ENCODE measurements at regions of chr6 and their contacts with region 1.

Region 1: DNA sequence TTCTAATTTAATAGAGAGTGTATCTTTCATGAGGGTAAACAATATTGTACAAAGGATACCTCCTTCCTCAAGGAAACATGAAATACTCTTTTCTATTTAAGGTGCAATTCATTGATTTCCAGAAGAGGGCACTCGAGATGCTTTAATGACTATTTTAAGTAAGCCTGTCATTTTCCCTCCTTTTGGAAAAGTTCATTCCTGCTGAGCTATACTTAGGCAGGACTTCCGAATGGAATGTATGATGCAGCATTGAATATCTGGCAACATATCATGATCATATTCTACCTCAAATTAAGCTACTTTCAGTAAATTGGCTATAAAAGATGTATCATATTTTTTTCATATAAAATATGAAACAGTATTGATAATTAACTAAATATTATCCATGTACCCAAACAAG is 5.0 kb downstream of the DST start:
- DNase-seq: no peak
- ATAC-seq: peak in 7 of 8 donors; percentile 55 to 71 (median 66)
- H3K4me3 ChIP-seq: no peak overlapping the region
- H3K27ac ChIP-seq: peak overlapping the region in 1 of 10 donors; percentile 55
- H3K4me1 ChIP-seq: peaks cover 0 to 14% (median 3%) of the 10 kb centered on the region in 9 donors
- H3K27me3 ChIP-seq: no peaks in the 10 kb centered on the region
- CTCF ChIP-seq: peak in 8 of 9 donors; percentile 59 to 85 (median 76)

Region 2: DNA sequence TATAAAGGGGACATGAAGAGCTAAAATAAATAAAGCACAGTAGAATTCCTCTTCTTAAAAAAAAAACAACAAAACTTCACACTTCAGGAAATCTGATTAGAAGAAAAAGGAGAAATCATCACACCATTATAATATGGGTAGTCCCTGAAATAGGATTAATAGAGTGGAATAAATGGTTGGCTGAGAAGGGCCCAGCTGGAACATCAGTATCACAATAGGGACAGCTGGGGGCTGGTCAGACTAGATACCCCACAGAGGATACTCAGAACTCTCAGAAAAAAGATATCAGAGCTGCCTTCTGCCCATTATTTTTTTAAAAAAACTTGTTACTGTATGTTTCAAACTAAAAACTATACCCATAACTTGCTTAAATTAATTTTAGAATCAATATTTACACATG is 70.1 kb before region 1 on chr6:
- intact Hi-C with region 1: no loop called
- DNase-seq: no peak
- ATAC-seq: no peak
- H3K4me3 ChIP-seq: no peak overlapping the region
- H3K27ac ChIP-seq: no peak overlapping the region
- H3K4me1 ChIP-seq: peaks cover 0 to 10% (median 0%) of the 10 kb centered on the region in 9 donors
- H3K27me3 ChIP-seq: no peaks in the 10 kb centered on the region
- CTCF ChIP-seq: no peak

Region 3: DNA sequence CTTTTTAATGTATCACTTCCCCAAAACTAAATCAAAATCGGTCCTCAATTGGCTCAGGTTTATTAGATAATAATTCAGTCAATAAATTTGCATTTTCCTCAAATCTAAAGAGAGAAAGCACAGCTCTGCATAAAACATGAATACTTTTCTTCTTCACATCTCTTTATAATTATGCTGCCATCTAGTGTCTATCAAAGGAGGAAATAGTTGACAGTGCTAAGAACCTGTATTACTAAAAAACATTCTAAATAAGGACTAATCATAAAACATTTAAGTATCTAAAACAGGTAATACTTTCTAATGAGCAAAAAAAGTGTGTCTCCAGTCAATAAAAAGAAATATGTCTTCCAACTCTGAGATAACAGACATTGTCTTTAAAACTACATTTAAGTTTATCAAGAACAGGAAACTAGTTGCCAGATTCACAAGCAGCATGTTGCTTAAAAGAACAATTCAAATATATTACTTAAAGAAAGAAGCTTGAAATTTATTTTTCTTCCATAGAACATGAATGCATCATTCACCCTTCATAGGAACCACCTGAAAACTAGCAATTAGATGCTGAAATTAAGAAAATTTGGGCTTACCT is 61.5 kb after region 1 on chr6:
- intact Hi-C with region 1: loop called (anchors 1 to 5 kb)
- DNase-seq: no peak
- ATAC-seq: peak in 5 of 8 donors; percentile 52 to 74 (median 65)
- H3K4me3 ChIP-seq: no peak overlapping the region
- H3K27ac ChIP-seq: no peak overlapping the region
- H3K4me1 ChIP-seq: peaks cover 0 to 16% (median 8%) of the 10 kb centered on the region in 9 donors
- H3K27me3 ChIP-seq: no peaks in the 10 kb centered on the region
- CTCF ChIP-seq: peak; percentile 34 to 76 (median 60)

Region 4: GRCh38 chr6:56757588-56757984 is 119.9 kb after region 1 on chr6:
- intact Hi-C with region 1: loop called in 5 of 10 experiments (anchors 5 to 10 kb)
- DNase-seq: no peak
- ATAC-seq: peak in 7 of 8 donors; percentile 22 to 65 (median 58)
- H3K4me3 ChIP-seq: no peak overlapping the region
- H3K27ac ChIP-seq: peak overlapping the region in 1 of 10 donors; percentile 52
- H3K4me1 ChIP-seq: peaks cover 3 to 68% (median 59%) of the 10 kb centered on the region in 9 donors
- H3K27me3 ChIP-seq: no peaks in the 10 kb centered on the region
- CTCF ChIP-seq: peak in 6 of 9 donors; percentile 29 to 55 (median 44)

Region 5: DNA sequence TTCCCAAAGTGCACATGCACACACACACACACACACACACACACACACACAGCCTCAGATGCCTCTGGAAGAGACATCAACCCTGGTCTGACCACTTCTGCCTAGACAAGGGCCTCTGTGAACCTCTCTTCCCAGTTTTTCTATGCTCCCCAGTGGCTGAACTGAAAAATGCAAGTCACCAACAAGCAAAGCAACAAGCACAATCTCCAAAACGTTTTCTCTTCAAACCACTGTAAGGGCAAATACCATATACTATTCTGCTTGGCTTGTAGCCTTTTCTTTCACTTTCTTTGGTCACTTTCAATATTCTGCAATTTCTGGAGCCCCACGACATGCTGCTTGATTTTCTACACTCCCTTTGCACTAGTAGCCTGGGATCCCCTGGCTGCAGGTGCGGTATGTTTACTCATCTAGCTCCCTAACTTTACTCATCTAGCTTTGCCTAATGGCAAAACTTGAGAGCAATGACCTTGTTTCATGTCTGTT is 126.5 kb after region 1 on chr6:
- intact Hi-C with region 1: loop called in 5 of 10 experiments (anchors 5 to 10 kb)
- DNase-seq: no peak
- ATAC-seq: peak in 7 of 8 donors; percentile 23 to 75 (median 66)
- H3K4me3 ChIP-seq: no peak overlapping the region
- H3K27ac ChIP-seq: peak overlapping the region in 2 of 10 donors; percentile 1 to 27
- H3K4me1 ChIP-seq: peaks cover 3 to 58% (median 37%) of the 10 kb centered on the region in 9 donors
- H3K27me3 ChIP-seq: no peaks in the 10 kb centered on the region
- CTCF ChIP-seq: peak in 6 of 9 donors; percentile 16 to 48 (median 41)

Region 6: DNA sequence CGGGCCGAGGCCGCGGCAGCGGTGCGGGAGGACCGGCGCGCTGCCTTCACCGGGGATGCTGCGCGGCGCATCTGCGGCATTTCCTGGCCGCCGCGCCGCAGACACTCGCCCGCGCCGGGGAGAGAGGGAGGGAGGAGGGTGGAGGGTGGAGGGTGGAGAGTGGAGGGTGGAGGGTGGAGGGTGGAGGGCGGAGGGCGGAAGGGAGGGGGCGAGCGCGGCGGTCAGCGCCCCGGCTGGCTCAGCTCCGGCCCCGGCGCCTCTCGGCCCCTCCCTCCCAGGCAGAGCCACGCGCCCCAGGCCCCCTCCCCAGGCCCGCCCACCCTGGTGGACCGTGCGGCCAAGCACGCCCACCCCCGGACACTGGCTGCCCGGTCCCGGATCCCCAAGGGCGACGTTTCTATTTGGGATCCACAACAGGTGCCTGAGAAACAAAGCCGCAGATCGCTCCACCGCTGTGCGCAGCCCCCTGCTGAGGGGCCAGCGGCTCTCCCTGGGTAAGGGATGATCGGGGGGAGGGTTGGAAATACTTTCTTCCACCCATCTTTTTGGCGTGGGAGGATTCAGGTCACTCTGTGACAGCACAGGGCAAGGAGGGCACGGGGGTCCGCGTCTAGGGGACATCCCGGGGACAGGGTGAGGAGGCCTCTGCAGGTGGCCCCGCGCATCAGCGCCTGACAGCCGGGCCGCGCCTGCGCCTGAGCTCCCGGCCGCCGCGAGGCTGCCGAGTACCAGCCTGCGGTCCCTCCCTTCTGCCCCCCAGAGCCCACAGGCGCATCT is 206.1 kb after region 1 on chr6:
- intact Hi-C with region 1: loop called in 2 of 10 experiments (anchors 2 to 5 kb)
- DNase-seq: peak; percentile 67 to 78
- ATAC-seq: peak; percentile 85 to 96 (median 92)
- H3K4me3 ChIP-seq: peak overlapping the region; percentile 52 to 77 (median 70)
- H3K27ac ChIP-seq: peak overlapping the region; percentile 80 to 96 (median 91)
- H3K4me1 ChIP-seq: peaks cover 0 to 60% (median 32%) of the 10 kb centered on the region in 9 donors
- H3K27me3 ChIP-seq: peaks cover 0 to 13% (median 0%) of the 10 kb centered on the region in 7 donors
- CTCF ChIP-seq: peak; percentile 37 to 79 (median 63)

Region 7: DNA sequence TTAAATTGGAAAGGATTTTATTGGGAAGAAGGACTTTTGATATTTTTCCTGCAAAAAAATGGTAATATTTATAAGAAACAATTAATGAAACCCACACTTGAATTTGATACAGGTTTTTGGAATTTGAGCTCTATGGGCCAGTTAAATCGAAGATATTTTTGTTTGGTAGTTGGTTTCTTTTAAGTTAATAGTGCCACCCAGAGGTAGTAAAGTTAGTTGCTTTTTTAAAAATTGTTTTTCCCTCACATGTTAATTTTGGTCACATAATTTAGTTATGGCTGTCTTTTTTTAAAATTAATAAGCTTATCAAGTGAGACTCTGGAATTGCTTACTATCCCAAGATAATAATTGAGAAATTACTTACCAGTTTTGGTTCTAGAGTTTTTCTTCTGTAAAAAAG is 686.9 kb after region 1 on chr6:
- intact Hi-C with region 1: loop called in 2 of 10 experiments (anchors 10 kb)
- DNase-seq: no peak
- ATAC-seq: no peak
- H3K4me3 ChIP-seq: no peak overlapping the region
- H3K27ac ChIP-seq: no peak overlapping the region
- H3K4me1 ChIP-seq: no peaks in the 10 kb centered on the region
- H3K27me3 ChIP-seq: no peaks in the 10 kb centered on the region
- CTCF ChIP-seq: peak in 8 of 9 donors; percentile 20 to 61 (median 56)